Panc1 (cell line): ENCODE measurements at regions of chr2 and their contacts with region 1.

Region 1: DNA sequence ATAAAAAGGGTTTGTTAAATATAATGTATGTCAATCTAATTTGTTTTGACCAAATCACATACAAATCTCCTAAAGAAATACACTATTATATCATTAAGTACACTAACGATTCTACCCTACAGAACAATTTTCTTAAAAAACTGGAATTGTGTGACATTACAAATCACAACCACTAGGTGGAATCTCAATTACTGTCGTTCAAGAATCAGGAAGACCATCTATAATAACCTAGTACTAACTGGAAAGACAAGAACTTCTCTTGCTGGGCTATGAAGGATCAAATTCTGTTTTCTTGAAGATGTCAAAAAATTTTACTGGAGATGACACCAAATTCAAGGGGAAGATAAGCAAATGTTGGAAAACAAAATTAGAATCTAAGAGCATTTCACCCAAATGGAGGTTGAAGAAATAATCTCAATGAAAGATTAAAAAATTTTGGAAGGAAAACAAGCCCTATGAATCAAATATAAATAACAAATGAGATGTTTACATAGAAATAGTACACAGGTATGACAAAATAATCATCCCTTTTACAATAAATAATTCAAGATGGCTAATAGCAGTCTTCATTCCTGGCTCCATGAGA is 110.9 kb downstream of the STK39 start:
- DNase-seq: peak; percentile 39
- ATAC-seq: no peak
- H3K4me3 ChIP-seq: no peak overlapping the region
- H3K27ac ChIP-seq: no peak overlapping the region
- H3K4me1 ChIP-seq: no peaks in the 10 kb centered on the region
- H3K27me3 ChIP-seq: no peaks in the 10 kb centered on the region
- CTCF ChIP-seq: peak; percentile 64; the same call in 1 of the 2 replicates

Region 2: GRCh38 chr2:167181134-167181533 is 955.4 kb before region 1 on chr2:
- CTCF ChIA-PET with region 1: no interaction called
- POLR2A ChIA-PET with region 1: no interaction called
- in situ Hi-C with region 1: no loop called
- intact Hi-C with region 1: no loop called
- DNase-seq: peak; percentile 66
- ATAC-seq: no peak
- H3K4me3 ChIP-seq: no peak overlapping the region
- H3K27ac ChIP-seq: no peak overlapping the region
- H3K4me1 ChIP-seq: no peaks in the 10 kb centered on the region
- H3K27me3 ChIP-seq: no peaks in the 10 kb centered on the region
- CTCF ChIP-seq: no peak

Region 3: DNA sequence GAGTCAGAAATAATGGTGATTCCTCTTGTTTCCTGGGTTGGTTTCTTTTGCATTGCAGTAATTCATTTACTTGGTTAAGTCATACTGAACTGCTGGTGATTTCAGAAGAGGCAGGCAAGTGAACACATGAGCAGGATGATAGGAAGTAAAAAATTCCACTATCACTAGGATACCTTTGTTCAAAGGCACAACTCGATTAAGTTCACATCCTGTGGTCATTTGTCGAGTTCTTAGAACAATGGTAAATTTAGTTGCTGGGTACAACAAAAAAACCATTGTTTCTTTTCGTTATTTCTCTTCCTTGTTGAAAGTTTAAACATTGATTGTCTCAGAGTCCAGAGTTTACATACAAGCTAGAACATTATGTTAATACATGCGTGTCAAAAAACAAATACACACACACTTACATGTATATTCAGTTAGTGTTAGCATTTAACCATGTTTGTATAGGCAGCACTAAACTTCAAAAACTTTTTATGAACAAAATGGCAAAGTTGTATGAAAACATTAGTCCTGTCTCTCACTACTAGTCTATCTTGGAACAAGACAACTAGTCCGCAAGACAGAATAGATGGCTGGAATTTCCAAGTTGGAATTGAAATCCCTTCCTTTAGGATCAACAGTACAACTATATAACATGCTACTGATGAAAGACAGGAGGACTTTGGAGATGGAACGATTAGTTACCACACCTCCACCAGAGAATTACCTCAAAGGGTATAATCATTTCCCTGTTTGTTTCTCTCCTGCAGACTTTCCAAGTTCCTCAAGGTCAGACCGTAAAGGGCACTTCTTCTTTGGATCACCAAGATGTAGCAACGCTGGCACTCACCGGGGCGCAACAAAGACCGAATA is 84.7 kb after region 1 on chr2:
- CTCF ChIA-PET with region 1: no interaction called
- POLR2A ChIA-PET with region 1: no interaction called
- in situ Hi-C with region 1: no loop called
- intact Hi-C with region 1: no loop called
- DNase-seq: no peak
- ATAC-seq: no peak
- H3K4me3 ChIP-seq: no peak overlapping the region
- H3K27ac ChIP-seq: no peak overlapping the region
- H3K4me1 ChIP-seq: no peaks in the 10 kb centered on the region
- H3K27me3 ChIP-seq: no peaks in the 10 kb centered on the region
- CTCF ChIP-seq: no peak

Region 4: DNA sequence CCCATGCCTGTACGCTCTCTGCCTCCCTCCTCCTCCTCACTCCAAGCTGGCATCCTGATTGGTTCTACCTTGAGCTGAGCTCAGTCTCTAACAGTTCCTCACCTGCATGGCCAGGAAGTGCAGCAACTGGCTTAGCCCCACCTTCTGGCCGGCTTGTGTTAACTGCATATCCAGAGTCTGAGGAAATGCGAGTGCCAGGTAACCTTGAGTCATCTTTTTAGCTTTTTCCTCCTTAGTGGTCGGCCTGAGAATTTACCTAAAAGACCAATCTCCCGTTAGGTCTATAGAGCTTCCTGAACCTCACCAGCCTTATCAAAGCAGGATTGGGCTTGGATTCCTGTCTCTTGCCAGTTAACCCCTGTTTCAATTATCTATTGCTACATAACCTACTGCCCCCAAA is 200.4 kb after region 1 on chr2:
- CTCF ChIA-PET with region 1: no interaction called
- POLR2A ChIA-PET with region 1: no interaction called
- in situ Hi-C with region 1: no loop called
- intact Hi-C with region 1: loop called (anchors 5 kb)
- DNase-seq: no peak
- ATAC-seq: peak; percentile 70; the same call in 1 of the 2 replicates
- H3K4me3 ChIP-seq: no peak overlapping the region
- H3K27ac ChIP-seq: no peak overlapping the region
- H3K4me1 ChIP-seq: no peaks in the 10 kb centered on the region
- H3K27me3 ChIP-seq: peaks cover 17% of the 10 kb centered on the region
- CTCF ChIP-seq: peak; percentile 72

Region 5: DNA sequence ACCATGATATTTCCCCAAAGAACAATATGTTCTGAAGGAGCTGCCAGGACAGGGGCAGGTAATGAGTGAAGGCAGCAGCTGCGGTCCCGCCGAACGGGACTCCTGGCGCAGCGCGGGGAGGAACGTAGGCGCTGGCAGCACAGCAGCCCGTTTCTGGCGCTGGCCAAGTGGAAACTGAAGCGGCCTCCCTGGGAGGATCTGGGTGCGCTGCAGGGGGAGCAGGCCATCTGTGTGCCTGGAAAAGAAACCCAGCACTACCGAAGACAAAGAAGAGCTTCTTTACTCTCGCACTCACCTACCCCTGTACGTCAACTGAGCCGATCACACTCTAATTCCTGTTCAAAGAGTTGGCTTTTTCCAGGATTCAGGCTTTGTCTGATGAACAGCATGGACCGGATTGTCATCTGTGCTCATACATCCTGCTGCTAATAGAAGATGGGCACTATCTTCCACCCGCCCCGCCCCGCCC is 776.5 kb after region 1 on chr2:
- CTCF ChIA-PET with region 1: no interaction called
- POLR2A ChIA-PET with region 1: no interaction called
- in situ Hi-C with region 1: no loop called
- intact Hi-C with region 1: loop called (anchors 10 kb)
- DNase-seq: no peak
- ATAC-seq: no peak
- H3K4me3 ChIP-seq: peak overlapping the region; percentile 12 to 15; a peak in 3 of 4 replicates
- H3K27ac ChIP-seq: no peak overlapping the region
- H3K4me1 ChIP-seq: 0 out of 2 replicates have a peak, but pooled peaks cover 3% of the 10 kb centered on the region
- H3K27me3 ChIP-seq: peaks cover 21% of the 10 kb centered on the region
- CTCF ChIP-seq: no peak